ENCODE measurements at regions of chr15 and their contacts with region 1.

Region 1: GRCh38 chr15:68875377-68876116 is 54.8 kb upstream of the SPESP1 start:
- DNase-seq: peak; percentile 93

Region 2: DNA sequence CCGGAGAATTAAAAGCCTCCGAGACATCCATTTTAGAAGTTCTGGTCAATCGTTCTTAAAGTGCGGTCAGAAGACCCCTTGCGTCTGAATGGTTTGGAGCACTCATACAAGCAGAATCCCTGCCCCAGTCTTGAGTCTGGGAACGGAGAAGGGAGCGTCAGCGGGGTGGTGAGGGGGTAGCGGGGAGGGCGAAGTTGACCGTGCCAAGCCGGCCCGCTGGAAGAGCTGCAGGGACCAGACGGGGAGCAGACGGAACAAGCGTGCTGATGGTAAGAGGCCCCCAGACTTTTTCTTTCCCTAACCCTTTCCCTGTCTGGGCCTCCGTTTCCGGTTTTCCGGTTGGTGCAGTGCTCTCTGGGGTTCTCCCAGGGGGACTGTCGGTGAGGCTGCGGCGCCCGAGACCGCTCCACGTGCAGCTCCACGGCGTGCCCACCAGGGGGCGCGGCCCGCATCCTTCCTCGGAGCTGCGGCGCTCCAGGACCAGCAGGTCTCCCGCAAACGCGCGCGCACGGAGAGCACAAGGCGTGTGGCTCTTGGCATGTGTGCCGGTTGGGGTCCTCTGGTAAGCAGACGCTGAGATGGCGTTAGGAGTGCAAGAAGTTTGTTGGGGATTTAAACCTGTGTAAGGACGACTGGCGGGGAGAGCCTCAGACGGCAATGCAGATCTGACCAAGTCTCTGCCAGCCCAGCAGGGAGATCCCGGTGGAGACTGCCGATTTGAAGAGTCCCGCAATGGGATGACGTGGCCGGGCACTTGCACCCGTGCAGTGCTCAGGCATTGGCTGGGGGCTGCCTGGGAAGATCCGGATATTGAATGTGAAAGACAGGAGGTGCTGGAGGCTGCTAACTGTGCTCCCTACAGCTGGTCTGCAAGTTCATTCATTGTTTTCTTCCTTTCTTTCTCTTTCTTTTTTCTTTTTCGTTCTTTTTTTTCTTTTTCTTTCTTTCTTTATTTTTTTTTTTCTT is 315.9 kb before region 1 on chr15:
- in situ Hi-C with region 1: loop called (anchors 25 kb)
- DNase-seq: peak; percentile 90

Region 3: DNA sequence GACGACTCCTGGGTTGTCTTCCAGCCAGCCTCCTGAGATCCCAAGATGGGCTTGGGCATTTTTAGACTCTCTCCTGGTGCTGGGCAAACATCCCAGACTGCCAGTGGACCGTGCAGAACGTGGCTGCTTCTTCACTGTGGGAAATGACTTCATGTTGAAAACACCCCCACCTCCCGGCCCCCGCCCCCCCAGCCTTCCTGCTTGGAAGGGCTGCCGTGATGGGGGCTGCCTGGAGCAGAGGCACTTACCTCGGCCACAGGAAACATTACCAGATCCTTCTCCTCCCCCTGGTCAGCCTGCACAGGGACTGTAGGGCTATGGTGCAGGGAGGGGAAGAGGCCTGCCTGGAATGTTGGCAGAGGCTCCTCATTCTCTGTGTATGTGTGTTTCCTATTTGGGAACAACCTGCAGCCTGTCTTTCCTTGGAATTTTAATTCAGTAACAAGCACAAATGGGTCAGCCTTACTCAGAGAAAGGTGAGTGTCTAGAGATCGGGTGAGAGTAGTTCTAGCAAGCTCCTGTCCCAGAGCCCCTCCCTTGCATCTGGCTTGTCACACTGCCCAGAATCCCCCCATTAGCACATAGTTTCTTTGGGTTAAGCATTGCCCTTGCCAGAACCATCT is 145.6 kb before region 1 on chr15:
- in situ Hi-C with region 1: loop called (anchors 10 kb)
- DNase-seq: no peak

Region 4: GRCh38 chr15:68783226-68784058 is 92.1 kb before region 1 on chr15:
- in situ Hi-C with region 1: loop called (anchors 10 kb)
- DNase-seq: peak; percentile 75

Region 5: GRCh38 chr15:68816795-68817303 is 58.7 kb before region 1 on chr15:
- in situ Hi-C with region 1: no loop called
- DNase-seq: no peak

Measured in KBM-7 (cell line).